ENCODE measurements at regions of chr6 and their contacts with region 1.

Region 1: GRCh38 chr6:111793711-111794111 is 79.5 kb downstream of the FYN start:
- DNase-seq: peak; percentile 86
- ATAC-seq: peak; percentile 86
- H3K4me3 ChIP-seq: peak overlapping the region; percentile 56 to 63 (median 57)
- H3K27ac ChIP-seq: peak overlapping the region; percentile 61
- H3K4me1 ChIP-seq: peaks cover 85% of the 10 kb centered on the region
- H3K27me3 ChIP-seq: no peaks in the 10 kb centered on the region
- CTCF ChIP-seq: no peak; the same call in 1 of the 2 replicates
- EP300 ChIP-seq: 0 out of 4 replicates have a peak, but pooled peaks of 1 of the 2 experiments have one; percentile 31
- POLR2A ChIP-seq: peak; percentile 66 to 67
- RAD21 ChIP-seq: no peak

Region 2: GRCh38 chr6:111680015-111680712 is 113.5 kb before region 1 on chr6:
- CTCF ChIA-PET with region 1: no interaction called
- POLR2A ChIA-PET with region 1: no interaction called
- in situ Hi-C with region 1: no loop called
- intact Hi-C with region 1: no loop called
- DNase-seq: no peak
- ATAC-seq: no peak
- H3K4me3 ChIP-seq: no peak overlapping the region
- H3K27ac ChIP-seq: no peak overlapping the region
- H3K4me1 ChIP-seq: peaks cover 53% of the 10 kb centered on the region
- H3K27me3 ChIP-seq: no peaks in the 10 kb centered on the region
- CTCF ChIP-seq: no peak
- EP300 ChIP-seq: no peak
- POLR2A ChIP-seq: no peak
- RAD21 ChIP-seq: no peak

Region 3: GRCh38 chr6:111841822-111842221 is 48.1 kb after region 1 on chr6:
- CTCF ChIA-PET with region 1: no interaction called
- POLR2A ChIA-PET with region 1: interaction called, 5 read pairs
- in situ Hi-C with region 1: no loop called
- intact Hi-C with region 1: loop called (anchors 5 kb)
- DNase-seq: no peak
- ATAC-seq: no peak
- H3K4me3 ChIP-seq: no peak overlapping the region
- H3K27ac ChIP-seq: no peak overlapping the region
- H3K4me1 ChIP-seq: peaks cover 53% of the 10 kb centered on the region
- H3K27me3 ChIP-seq: no peaks in the 10 kb centered on the region
- CTCF ChIP-seq: no peak
- EP300 ChIP-seq: no peak
- POLR2A ChIP-seq: no peak
- RAD21 ChIP-seq: no peak

Region 4: GRCh38 chr6:111873178-111874024 is 79.7 kb after region 1 on chr6 and contains the start of gene FYN:
- CTCF ChIA-PET with region 1: no interaction called
- POLR2A ChIA-PET with region 1: no interaction called
- in situ Hi-C with region 1: no loop called
- intact Hi-C with region 1: loop called (anchors 2 kb)
- DNase-seq: peak; percentile 92
- ATAC-seq: peak; percentile 99
- H3K4me3 ChIP-seq: peak within 1 kb of the TSS; percentile 66 to 82 (median 68)
- H3K27ac ChIP-seq: no peak within 1 kb of the TSS
- H3K4me1 ChIP-seq: peaks cover 40% of the 10 kb centered on the region
- H3K27me3 ChIP-seq: peaks cover 0 to 21% of the 10 kb centered on the region in 2 experiments; a peak in 4 of 5 replicates
- CTCF ChIP-seq: peak; percentile 47
- EP300 ChIP-seq: no peak
- POLR2A ChIP-seq: no peak; a peak in 1 of 4 replicates
- RAD21 ChIP-seq: peak; percentile 56; the same call in 1 of the 2 replicates
- total RNA-seq, gene FYN: 14.6 and 15.5 TPM in 2 replicates

Measured in HepG2 (cell line).